CD8-positive, alpha-beta T cell (primary cell): ENCODE measurements at regions of chr7 and their contacts with region 1.

Region 1: GRCh38 chr7:27196287-27196767 is 3.6 kb downstream of the HOXA13 start:
- DNase-seq: peak; percentile 67 to 89 (median 83)
- ATAC-seq: no peak
- H3K4me3 ChIP-seq: no peak overlapping the region
- H3K4me3 Mint-ChIP-seq: no peak overlapping the region
- H3K27ac ChIP-seq: no peak overlapping the region
- H3K27ac Mint-ChIP-seq: no peak overlapping the region
- H3K4me1 ChIP-seq: peaks cover 46% of the 10 kb centered on the region
- H3K4me1 Mint-ChIP-seq: peaks cover 33% of the 10 kb centered on the region
- H3K27me3 ChIP-seq: peaks cover 69 to 71% of the 10 kb centered on the region in 2 experiments
- H3K27me3 Mint-ChIP-seq: peaks cover 80% of the 10 kb centered on the region
- CTCF ChIP-seq: peak; percentile 78

Region 2: GRCh38 chr7:27160546-27161213 is 35.6 kb before region 1 on chr7:
- CTCF ChIA-PET with region 1: interaction called, 7 read pairs
- POLR2A ChIA-PET with region 1: no interaction called
- intact Hi-C with region 1: loop called in 1 of 2 experiments (anchors 5 kb)
- DNase-seq: peak; percentile 70 to 93 (median 87)
- ATAC-seq: peak; percentile 87
- H3K4me3 ChIP-seq: peak overlapping the region; percentile 63 to 79
- H3K4me3 Mint-ChIP-seq: peak overlapping the region; percentile 80
- H3K27ac ChIP-seq: no peak overlapping the region
- H3K27ac Mint-ChIP-seq: no peak overlapping the region
- H3K4me1 ChIP-seq: peaks cover 31% of the 10 kb centered on the region
- H3K4me1 Mint-ChIP-seq: peaks cover 41% of the 10 kb centered on the region
- H3K27me3 ChIP-seq: peaks cover 52 to 70% of the 10 kb centered on the region in 2 experiments
- H3K27me3 Mint-ChIP-seq: peaks cover 77% of the 10 kb centered on the region
- CTCF ChIP-seq: peak; percentile 97

Region 3: DNA sequence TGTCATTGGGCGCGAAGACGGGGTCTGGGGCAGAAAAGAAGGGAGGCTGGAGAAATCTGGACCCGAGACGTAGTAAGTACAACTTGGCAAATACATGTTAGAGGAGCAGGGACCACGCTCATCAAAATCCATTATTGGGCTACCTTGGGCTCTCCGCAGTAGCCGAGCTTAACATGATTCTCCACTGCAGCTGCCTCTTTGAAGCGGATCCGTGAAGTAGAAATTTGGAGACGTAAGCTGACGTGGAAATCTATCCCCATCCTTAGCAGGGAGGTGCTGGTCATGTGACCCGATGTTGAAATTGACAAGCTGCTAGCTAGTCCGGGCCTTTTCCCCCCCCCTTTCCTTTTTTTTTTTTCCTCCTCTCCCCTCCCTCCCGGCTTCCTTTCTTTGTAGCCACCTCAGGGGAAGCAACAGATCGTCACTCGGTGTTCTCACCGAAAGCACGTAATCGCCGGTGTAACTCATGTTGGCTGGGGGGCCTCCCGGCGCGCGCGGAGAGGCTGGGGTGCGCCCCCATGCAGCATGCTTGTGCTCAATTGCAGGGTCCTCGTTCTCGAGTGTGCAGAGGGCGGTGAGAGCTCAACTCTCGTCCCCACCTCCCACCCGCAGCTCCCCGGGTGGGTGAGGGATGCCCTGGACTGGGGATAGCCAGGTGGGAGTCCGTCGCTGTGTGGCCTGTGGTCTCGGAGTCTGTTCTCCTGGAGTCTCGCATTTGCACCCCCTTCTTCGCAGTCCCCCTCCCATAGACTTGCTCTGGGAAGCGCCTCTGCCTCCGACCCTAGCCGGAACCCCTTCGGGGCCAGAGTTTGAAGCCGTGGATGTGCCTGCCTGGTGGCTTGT is 11.1 kb before region 1 on chr7 and contains the start of gene HOXA11:
- CTCF ChIA-PET with region 1: interaction called, 30 read pairs
- POLR2A ChIA-PET with region 1: interaction called, 5 read pairs
- intact Hi-C with region 1: no loop called
- DNase-seq: peak in 2 of 9 experiments; percentile 56 to 58
- ATAC-seq: peak; percentile 34
- H3K4me3 ChIP-seq: peak within 1 kb of the TSS; percentile 40 to 42
- H3K4me3 Mint-ChIP-seq: peak within 1 kb of the TSS; percentile 76
- H3K27ac ChIP-seq: no peak within 1 kb of the TSS
- H3K27ac Mint-ChIP-seq: no peak within 1 kb of the TSS
- H3K4me1 ChIP-seq: peaks cover 56% of the 10 kb centered on the region
- H3K4me1 Mint-ChIP-seq: peaks cover 57% of the 10 kb centered on the region
- H3K27me3 ChIP-seq: peaks cover 85 to 89% of the 10 kb centered on the region in 2 experiments
- H3K27me3 Mint-ChIP-seq: peaks cover 80% of the 10 kb centered on the region
- CTCF ChIP-seq: no peak
- total RNA-seq, gene HOXA11: not detected

Region 4: DNA sequence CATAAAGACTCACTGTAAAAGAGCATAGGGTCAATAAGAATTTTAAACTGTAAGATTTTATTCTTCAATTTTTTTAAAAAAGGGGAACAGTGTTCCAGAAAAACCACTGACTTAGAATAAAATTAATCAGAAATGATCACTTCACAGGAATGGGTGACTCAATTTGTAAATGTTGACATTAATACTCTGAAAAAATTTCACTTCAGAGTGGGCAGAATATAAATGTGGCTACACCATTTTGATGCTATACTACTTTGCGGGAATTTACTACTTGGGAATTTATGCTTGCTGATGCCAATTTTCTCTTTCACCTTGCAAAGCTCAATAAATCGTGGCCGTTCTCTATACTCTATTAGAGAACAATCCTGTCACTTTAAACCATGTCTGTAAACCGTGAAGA is 339.5 kb after region 1 on chr7:
- CTCF ChIA-PET with region 1: no interaction called
- POLR2A ChIA-PET with region 1: no interaction called
- intact Hi-C with region 1: no loop called
- DNase-seq: no peak
- ATAC-seq: no peak
- H3K4me3 ChIP-seq: no peak overlapping the region
- H3K4me3 Mint-ChIP-seq: no peak overlapping the region
- H3K27ac ChIP-seq: no peak overlapping the region
- H3K27ac Mint-ChIP-seq: no peak overlapping the region
- H3K4me1 ChIP-seq: no peaks in the 10 kb centered on the region
- H3K4me1 Mint-ChIP-seq: no peaks in the 10 kb centered on the region
- H3K27me3 ChIP-seq: no peaks in the 10 kb centered on the region
- H3K27me3 Mint-ChIP-seq: no peaks in the 10 kb centered on the region
- CTCF ChIP-seq: no peak

Region 5: DNA sequence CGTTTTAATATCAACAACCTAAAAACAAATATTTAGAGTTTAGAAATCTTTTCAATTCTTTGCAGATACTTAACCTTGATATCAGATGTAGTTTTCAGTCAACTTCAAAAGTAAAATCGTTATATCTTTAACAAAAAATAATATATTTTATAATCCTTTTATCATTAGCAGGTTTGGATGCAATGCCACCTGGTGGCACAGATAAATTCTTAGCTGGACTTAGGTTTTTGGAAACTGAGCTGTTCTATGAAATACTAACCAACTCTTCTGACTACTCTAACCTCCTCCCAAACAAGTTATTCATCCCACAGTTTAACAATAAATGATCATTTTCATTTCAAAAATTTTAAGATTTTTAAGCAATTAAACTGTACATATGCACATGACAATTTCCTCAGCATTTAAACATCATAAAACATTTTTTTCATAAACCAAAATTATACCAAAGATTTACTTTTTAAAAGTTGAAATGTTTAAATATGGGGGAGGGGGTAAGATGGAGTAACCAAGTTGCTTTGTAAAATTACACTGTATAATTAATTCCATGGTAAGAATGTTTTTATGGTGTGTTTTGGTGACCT is 409.5 kb after region 1 on chr7:
- CTCF ChIA-PET with region 1: no interaction called
- POLR2A ChIA-PET with region 1: no interaction called
- intact Hi-C with region 1: loop called in 1 of 2 experiments (anchors 1 kb)
- DNase-seq: no peak
- ATAC-seq: no peak
- H3K4me3 ChIP-seq: no peak overlapping the region
- H3K4me3 Mint-ChIP-seq: no peak overlapping the region
- H3K27ac ChIP-seq: no peak overlapping the region
- H3K27ac Mint-ChIP-seq: no peak overlapping the region
- H3K4me1 ChIP-seq: no peaks in the 10 kb centered on the region
- H3K4me1 Mint-ChIP-seq: peaks cover 2% of the 10 kb centered on the region
- H3K27me3 ChIP-seq: no peaks in the 10 kb centered on the region
- H3K27me3 Mint-ChIP-seq: no peaks in the 10 kb centered on the region
- CTCF ChIP-seq: no peak

Region 6: GRCh38 chr7:27784393-27785053 is 588.2 kb after region 1 on chr7:
- CTCF ChIA-PET with region 1: interaction called, 7 read pairs
- POLR2A ChIA-PET with region 1: no interaction called
- intact Hi-C with region 1: loop called (anchors 2 kb)
- DNase-seq: peak in 3 of 9 experiments; percentile 23 to 69 (median 61)
- ATAC-seq: peak; percentile 64
- H3K4me3 ChIP-seq: no peak overlapping the region
- H3K4me3 Mint-ChIP-seq: no peak overlapping the region
- H3K27ac ChIP-seq: no peak overlapping the region
- H3K27ac Mint-ChIP-seq: peak overlapping the region; percentile 4
- H3K4me1 ChIP-seq: no peaks in the 10 kb centered on the region
- H3K4me1 Mint-ChIP-seq: peaks cover 12% of the 10 kb centered on the region
- H3K27me3 ChIP-seq: no peaks in the 10 kb centered on the region
- H3K27me3 Mint-ChIP-seq: no peaks in the 10 kb centered on the region
- CTCF ChIP-seq: peak; percentile 80

Region 7: DNA sequence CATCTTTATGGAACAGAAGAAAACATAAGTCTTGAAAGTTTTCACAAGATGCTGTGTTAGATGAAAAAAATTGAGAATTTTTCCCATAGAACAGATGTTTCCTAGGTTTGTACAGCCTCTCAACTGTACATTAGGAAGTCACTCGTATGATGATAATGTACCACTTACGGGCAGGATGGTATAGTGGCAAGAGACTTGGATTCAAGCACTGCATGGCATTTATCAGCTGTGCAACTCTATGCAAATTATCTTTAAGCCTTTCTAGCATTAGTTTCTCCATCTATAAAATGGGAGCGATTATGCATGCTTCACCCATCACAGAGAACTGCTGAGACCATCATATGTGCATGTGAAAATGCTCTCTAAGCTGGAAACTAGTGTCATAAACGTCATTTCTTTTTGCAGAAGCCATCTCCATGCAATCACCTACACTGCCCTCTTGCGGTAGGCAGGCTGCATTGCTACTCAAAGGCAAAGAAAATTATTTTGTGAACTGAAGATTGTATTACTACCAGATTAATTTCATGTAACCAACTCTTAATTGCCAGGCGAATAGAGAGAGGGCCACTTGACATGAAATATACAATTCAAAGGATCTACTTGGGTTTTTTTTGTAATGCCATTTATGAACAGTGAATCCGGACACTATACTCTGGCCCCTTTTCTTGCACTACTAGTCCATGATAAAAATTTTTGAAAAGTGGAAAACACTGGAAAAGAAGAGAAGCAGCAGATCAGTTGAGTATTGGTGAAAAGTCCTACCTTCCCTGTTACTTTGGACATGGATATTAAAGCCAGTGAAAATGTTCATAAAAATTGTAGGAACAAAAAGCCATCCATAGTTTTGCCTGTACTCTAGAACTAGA is 881.9 kb after region 1 on chr7:
- CTCF ChIA-PET with region 1: interaction called, 20 read pairs
- POLR2A ChIA-PET with region 1: no interaction called
- intact Hi-C with region 1: loop called (anchors 1 kb)
- DNase-seq: peak in 8 of 9 experiments; percentile 20 to 67 (median 48)
- ATAC-seq: peak; percentile 69
- H3K4me3 ChIP-seq: no peak overlapping the region
- H3K4me3 Mint-ChIP-seq: no peak overlapping the region
- H3K27ac ChIP-seq: no peak overlapping the region
- H3K27ac Mint-ChIP-seq: no peak overlapping the region
- H3K4me1 ChIP-seq: no peaks in the 10 kb centered on the region
- H3K4me1 Mint-ChIP-seq: peaks cover 2% of the 10 kb centered on the region
- H3K27me3 ChIP-seq: no peaks in the 10 kb centered on the region
- H3K27me3 Mint-ChIP-seq: peaks cover 3% of the 10 kb centered on the region
- CTCF ChIP-seq: peak; percentile 99